Colonic mucosa (tissue), 4 donors: ENCODE measurements at regions of chr10 and their contacts with region 1.

Region 1: GRCh38 chr10:34994565-34995142 is 95.5 kb downstream of the CUL2 start:
- DNase-seq: peak; percentile 55
- H3K4me3 ChIP-seq: no peak overlapping the region
- H3K27ac ChIP-seq: no peak overlapping the region
- H3K4me1 ChIP-seq: no peaks in the 10 kb centered on the region
- H3K27me3 ChIP-seq: no peaks in the 10 kb centered on the region
- CTCF ChIP-seq: peak; percentile 46

Region 2: DNA sequence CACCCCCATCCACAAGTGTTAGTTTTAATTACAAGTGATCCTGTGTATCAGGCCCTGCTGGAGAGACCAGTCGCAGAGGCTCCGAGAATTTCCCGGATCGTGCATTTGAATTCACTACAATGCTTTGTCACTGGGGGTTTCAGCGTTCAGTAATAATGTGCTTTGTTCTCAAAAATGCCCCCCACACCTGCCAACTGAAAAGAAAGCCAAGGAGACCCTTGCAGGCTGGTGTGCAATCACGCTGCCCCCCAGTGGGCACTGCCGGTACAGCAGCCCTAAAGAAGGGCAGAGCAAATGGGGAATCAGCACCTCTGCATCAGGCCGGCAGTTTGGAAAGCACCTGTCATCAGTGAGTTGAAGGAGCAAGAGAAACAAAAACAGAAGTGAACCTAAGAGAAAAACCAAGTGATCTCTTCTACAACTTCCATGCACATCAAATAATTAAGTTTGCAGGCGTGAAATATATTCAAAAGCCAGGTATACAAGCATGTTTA is 357.2 kb before region 1 on chr10:
- intact Hi-C with region 1: no loop called
- DNase-seq: peak; percentile 72
- H3K4me3 ChIP-seq: no peak overlapping the region
- H3K27ac ChIP-seq: no peak overlapping the region
- H3K4me1 ChIP-seq: no peaks in the 10 kb centered on the region
- H3K27me3 ChIP-seq: no peaks in the 10 kb centered on the region
- CTCF ChIP-seq: peak; percentile 96

Region 3: DNA sequence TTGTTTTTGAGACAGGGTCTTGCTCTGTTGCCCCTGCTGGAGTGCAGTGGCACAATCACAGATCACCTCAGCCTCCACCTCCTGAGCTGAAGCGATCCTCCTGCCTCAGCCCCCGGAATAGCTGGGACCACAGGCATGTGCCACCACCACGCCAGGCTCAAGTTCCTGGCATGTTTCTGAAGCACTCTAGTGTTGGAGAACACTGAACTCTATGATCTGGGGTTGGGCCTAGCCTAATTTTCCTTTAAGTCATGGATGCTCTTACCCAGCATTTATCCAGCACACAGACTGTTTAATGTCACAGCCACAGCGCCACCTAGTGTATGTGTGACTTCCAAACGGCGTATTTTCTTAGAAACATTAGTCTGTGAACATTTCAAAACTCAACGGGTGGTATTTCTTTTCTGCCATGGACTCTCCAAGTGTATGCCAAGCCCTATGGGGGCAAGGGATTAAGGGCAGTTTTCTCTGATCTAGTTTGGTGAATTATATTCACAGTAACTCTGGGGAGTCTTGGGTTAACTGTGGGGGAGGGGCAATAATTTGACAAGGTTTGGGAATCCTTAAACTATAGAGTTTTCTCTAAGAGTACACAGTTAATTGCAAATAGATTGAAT is 223.8 kb after region 1 on chr10:
- intact Hi-C with region 1: loop called (anchors 5 kb)
- DNase-seq: peak; percentile 84
- H3K4me3 ChIP-seq: no peak overlapping the region
- H3K27ac ChIP-seq: no peak overlapping the region
- H3K4me1 ChIP-seq: no peaks in the 10 kb centered on the region
- H3K27me3 ChIP-seq: no peaks in the 10 kb centered on the region
- CTCF ChIP-seq: peak; percentile 75

Region 4: DNA sequence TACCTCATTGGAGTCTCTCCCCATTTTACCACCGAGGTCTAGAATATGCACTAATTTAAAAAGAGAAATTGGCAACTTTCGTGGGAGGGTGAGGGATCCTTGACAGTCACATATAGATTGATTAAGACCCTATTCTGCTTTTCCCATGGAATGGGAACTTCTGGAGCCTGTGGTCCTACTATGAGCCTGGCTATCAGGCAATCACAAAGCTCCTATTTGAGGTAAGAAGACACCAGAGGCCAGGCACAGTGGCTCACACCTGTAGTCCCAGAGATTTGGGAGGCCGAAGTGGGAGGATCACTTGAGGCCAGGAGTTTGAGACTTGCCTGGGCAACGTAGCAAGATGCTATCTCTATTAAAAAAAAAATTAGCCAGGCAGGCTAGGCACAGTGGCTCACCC is 237.0 kb after region 1 on chr10:
- intact Hi-C with region 1: no loop called
- DNase-seq: no peak
- H3K4me3 ChIP-seq: no peak overlapping the region
- H3K27ac ChIP-seq: no peak overlapping the region
- H3K4me1 ChIP-seq: no peaks in the 10 kb centered on the region
- H3K27me3 ChIP-seq: no peaks in the 10 kb centered on the region
- CTCF ChIP-seq: no peak